ENCODE measurements at regions of chr2 and their contacts with region 1.

Region 1: DNA sequence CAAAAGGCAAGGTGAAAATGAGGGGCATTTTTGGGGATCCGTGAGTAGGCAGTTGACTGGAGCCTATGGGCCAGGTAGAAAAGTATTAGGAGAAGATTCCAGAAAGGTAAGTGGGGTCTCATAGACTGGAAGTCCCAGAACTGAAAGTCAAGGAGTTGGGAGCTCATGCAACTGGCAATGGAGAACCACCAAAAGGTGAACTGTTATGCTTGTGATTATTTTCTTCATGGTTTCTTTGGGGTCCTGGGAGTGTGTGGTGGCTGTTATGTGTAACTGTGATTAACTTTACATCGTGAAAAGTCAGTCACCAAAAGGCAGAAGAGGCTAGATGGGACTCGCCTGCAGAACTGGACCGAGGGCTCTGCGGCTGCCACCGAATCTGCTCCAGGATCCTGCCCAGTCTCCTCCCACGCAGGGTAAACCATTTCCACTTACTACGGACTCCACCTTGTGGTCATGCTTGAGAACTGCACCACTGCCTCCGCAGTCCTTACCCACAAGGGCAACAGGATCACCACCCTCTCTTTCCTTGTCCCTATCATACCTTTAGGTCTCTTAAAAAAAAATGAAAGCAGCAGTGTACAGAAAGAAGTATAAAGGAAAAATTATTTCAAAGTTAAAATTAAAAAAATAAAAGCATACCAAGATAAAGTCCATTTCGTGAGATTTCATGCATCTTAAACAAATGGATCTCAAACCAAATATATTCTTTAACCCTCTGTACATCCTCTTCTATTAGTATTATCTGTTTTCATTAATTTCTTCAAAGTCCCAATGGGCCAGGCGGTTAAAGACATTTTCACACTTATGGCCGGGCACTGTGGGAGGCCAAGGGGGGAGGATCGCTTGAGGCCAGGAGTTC is 15.6 kb upstream of the CEP68 start:
- DNase-seq: peak; percentile 86
- ATAC-seq: peak; percentile 100
- H3K4me3 ChIP-seq: peak overlapping the region; percentile 20
- H3K27ac ChIP-seq: no peak overlapping the region
- H3K4me1 ChIP-seq: peaks cover 5% of the 10 kb centered on the region
- H3K27me3 ChIP-seq: no peaks in the 10 kb centered on the region
- CTCF ChIP-seq: peak; percentile 99

Region 2: GRCh38 chr2:64914735-64915509 is 125.7 kb before region 1 on chr2:
- intact Hi-C with region 1: loop called (anchors 5 kb)
- DNase-seq: no peak
- ATAC-seq: no peak
- H3K4me3 ChIP-seq: no peak overlapping the region
- H3K27ac ChIP-seq: no peak overlapping the region
- H3K4me1 ChIP-seq: peaks cover 7% of the 10 kb centered on the region
- H3K27me3 ChIP-seq: no peaks in the 10 kb centered on the region
- CTCF ChIP-seq: no peak

Measured in upper lobe of right lung (tissue), 1 donor.